ENCODE measurements at regions of chr17 and their contacts with region 1.

Region 1: DNA sequence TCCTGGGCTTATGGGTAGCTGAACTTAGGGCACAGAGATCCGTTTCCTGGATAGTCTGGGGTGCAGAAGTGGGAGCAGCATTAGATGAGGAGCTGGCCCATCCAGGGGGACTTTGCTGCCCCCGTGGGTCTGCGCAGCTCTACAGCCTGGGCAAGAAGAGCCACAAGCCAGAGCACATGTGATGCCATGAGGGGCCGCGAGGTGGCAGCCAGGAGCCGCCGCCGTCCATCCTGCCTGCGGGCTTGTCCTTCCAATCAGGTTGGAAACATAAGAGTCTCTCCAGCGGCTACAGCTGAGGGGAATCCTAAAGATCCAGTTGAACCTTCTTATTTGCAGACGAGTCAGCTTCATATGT is 21.9 kb downstream of the C1QTNF1 start:
- DNase-seq: peak; percentile 85
- CTCF ChIP-seq: peak; percentile 92

Region 2: DNA sequence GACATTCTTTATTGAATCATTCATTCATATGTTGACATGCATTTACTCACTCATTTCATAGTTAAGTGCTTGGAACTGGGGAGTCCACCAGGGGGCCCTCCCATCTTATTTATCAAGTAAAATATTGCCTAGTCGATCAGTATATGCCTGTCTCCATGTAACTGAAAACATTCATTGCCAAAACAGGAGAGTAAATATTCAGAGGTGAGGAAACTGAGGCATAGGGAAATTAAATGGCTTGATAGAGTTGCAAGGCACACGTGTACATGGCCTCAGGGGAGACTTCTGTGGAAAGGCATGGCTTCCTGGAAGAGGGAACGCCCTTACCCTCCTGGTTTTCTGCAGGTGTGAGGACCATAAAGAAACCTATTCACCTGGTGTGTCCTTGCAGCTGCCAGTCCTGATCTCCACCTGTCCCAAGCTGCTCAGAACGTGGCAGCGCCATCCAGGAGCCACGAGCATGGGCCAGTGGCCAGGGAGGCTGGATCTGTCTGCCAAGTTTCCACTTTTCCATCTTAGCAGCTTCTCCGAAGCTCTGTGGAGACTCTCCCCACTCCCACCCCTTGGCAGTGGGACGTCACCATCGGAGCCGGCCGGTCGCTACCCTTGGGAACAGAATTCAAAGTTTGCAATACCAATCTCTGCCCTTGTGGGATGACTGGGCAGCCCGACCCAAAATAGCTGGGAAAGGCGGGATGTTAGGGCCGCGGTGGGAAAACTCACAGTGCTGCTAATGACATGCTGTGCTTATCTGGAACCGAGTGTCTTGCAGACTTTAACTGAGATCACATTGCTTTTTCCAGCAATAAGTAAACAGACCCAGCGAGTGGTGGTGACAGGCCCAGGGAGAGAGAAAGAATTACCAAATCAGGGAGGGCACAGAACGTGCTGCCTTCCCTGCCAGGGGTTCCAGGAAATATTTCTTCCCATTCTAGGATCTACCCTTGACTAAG is 25.9 kb before region 1 on chr17:
- CTCF ChIA-PET with region 1: interaction called, 24 read pairs
- POLR2A ChIA-PET with region 1: no interaction called
- DNase-seq: no peak
- CTCF ChIP-seq: peak; percentile 37

Region 3: DNA sequence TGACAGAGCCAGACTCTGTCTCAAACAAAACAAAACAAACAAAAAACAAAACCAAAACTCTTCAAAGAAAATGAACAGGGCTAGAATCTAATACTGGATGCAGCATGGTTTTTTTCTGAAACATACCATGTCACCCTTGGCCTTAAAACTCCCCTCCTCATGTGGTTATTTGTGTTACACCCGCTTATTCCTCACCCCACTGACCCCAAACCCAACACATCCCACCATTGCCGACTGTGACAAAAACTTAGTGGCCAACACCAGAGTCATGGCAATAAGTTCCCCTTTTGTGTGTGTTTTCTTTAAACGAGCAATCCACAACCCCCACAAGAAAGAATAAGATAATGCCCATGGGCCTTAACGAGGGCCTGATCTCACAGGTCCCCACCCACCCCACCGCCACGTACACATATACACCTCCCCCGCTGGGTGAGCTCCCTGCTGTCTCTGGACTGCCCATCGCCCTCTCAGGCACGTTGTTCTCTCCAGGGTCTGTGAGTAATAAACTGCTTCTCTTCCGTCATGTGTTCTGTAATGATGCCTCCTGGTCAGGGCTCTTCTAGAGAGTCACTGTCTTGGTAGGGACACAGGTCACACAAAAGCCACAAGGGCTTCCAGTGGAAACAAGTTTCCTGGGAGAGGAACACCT is 12.0 kb after region 1 on chr17:
- CTCF ChIA-PET with region 1: interaction called, 16 read pairs
- POLR2A ChIA-PET with region 1: no interaction called
- DNase-seq: peak; percentile 11
- CTCF ChIP-seq: no peak

Region 4: GRCh38 chr17:79074650-79075445 is 29.0 kb after region 1 on chr17 and contains the start of gene ENGASE:
- CTCF ChIA-PET with region 1: interaction called, 13 read pairs
- POLR2A ChIA-PET with region 1: no interaction called
- DNase-seq: peak; percentile 99
- CTCF ChIP-seq: no peak

Region 5: GRCh38 chr17:79082311-79083190 is 36.7 kb after region 1 on chr17:
- CTCF ChIA-PET with region 1: interaction called, 27 read pairs
- POLR2A ChIA-PET with region 1: no interaction called
- DNase-seq: peak; percentile 78
- CTCF ChIP-seq: peak; percentile 84

Region 6: DNA sequence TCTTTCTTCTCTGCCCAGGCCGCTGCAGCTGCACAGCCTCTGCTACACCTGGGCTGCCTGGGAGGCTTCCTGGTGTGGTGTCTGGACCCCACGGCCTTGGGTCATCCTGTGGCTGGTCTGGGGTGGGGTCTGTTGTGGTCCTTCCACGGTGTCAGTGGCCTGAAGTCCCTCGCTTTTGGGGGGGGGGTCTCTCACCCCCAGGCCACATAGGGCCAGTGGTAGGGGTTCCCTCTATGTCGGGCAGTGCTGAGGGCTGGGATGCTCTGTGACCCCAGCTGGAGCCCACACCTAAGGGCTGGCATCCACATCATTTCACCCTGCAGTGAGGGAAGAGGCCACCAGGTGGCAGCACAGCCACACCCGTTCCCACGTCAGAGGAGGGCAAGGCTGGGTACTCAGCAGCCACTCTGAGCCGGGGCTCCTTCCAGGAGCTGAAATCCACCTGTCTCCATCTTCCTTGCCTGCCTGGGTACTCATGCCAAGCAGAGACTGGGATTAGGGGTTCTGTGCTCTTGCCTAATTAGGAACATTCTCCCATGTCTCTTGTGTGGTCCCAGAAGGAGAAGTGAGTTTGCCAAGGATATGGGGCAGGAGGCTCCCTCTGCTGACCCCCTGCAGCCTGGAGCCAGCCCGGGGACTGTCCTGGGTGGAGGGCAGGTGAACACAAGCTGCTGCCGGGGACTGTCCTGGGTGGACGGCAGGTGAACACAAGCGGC is 41.8 kb after region 1 on chr17:
- CTCF ChIA-PET with region 1: interaction called, 27 read pairs
- POLR2A ChIA-PET with region 1: no interaction called
- DNase-seq: peak; percentile 85
- CTCF ChIP-seq: peak; percentile 86

Region 7: DNA sequence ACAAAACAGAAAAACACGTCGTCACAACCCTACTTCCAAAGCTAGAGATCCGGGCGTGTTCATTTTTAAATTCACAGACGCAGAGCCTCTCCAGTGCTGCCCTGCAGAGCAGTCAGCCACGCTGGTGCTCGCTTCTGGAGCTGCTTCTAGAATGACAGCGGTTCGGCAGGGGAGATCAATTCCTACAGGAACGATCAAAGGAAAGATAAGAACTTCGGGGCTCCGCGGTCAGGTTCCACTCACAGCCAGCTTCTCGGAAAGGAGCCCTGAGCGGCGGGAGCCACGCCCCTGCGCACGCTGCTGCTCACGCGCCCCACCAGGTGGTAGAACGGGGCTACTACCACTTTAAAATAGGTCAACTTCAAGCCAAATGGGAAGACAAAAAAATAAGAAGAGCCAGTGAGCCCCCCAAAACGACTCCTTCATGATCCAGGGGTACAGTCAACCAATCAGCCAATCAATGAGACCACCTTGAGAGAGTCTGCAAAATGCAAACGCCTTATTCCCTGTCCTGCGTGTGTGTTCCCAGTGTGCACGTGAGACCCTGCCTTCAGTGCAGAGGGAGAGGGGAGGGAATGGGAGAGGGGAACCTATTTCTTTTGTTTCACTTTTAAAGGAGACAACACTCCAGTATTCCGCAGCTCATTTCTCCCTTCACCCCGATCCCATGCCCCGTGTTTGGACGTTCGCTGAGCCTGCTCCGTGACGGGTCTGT is 355.3 kb after region 1 on chr17:
- CTCF ChIA-PET with region 1: interaction called, 11 read pairs
- POLR2A ChIA-PET with region 1: no interaction called
- DNase-seq: peak; percentile 89
- CTCF ChIP-seq: peak; percentile 89